WTC11 (cell line): ENCODE measurements at regions of chr1 and their contacts with region 1.

Region 1: GRCh38 chr1:28736450-28737306 is at the start of gene YTHDF2:
- DNase-seq: peak; percentile 98
- ATAC-seq: peak; percentile 88
- H3K4me3 Mint-ChIP-seq: peak within 1 kb of the TSS; percentile 94
- H3K27ac Mint-ChIP-seq: peak within 1 kb of the TSS; percentile 100
- H3K4me1 Mint-ChIP-seq: peaks cover 40% of the 10 kb centered on the region
- H3K27me3 Mint-ChIP-seq: no peaks in the 10 kb centered on the region
- CTCF ChIP-seq: peak; percentile 86
- total RNA-seq, gene YTHDF2: 111 to 126 TPM (median 114 TPM) in 3 replicates

Region 2: GRCh38 chr1:28190337-28190979 is 546.2 kb before region 1 on chr1:
- CTCF ChIA-PET with region 1: no interaction called
- POLR2A ChIA-PET with region 1: no interaction called
- DNase-seq: no peak
- ATAC-seq: no peak
- H3K4me3 Mint-ChIP-seq: no peak overlapping the region
- H3K27ac Mint-ChIP-seq: peak overlapping the region; percentile 53; the same call in 1 of the 2 replicates
- H3K4me1 Mint-ChIP-seq: peaks cover 12% of the 10 kb centered on the region
- H3K27me3 Mint-ChIP-seq: no peaks in the 10 kb centered on the region
- CTCF ChIP-seq: no peak

Region 3: DNA sequence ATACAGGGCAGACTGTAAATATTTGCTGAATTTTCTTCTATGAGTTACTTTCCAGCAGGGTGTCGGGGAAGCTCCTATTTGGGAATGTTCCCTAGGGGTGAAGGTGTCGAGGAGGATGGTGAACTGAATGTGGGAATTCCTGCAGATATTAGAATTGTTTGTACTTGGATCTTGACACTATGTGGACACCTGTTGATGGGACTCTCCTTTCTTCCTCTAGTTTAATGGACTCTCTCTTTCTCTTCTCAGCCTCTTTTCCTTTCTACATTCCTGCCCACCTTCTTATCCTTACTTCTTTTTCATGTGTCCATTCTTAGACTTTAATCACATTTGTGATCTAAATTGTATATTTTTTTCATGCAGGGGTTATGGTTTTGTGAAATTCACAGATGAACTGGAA is 169.7 kb before region 1 on chr1:
- CTCF ChIA-PET with region 1: no interaction called
- POLR2A ChIA-PET with region 1: no interaction called
- DNase-seq: no peak
- ATAC-seq: no peak
- H3K4me3 Mint-ChIP-seq: no peak overlapping the region
- H3K27ac Mint-ChIP-seq: no peak overlapping the region
- H3K4me1 Mint-ChIP-seq: no peaks in the 10 kb centered on the region
- H3K27me3 Mint-ChIP-seq: no peaks in the 10 kb centered on the region
- CTCF ChIP-seq: no peak

Region 4: DNA sequence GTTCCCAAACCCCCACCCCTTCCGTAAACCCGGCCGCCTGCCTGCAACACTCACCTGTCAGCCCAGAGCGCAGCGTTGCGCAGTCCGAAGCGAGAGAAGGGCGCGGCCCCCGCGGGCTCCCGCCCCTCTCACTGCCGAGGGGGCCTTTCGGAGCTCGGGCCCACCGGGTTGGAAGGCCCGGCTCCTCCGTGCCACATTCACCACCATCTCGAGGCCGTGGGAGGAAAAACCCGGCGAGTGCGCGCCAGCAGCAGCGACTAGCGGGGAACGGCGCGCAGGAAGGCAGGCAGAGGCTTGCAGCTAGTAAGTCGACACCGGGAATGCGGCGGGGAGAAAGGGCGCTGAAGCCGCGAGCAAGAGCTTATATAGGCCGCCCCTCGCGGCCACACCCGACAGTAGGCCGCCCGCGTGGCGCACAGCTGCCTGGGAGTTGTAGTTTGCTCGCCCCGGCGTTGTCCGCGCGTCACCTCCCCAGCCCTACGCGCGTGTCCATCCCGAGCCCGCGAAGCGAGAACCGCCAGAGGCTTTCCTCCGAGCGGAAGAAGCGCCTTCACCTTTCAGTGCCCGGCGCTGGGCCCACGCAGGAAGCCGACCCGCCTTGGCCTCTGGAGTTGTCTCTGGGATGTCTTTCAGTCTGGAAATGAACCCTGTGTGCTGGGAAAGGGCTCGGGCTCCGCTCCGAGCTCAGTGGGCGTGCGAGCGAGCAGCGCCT is 155.0 kb before region 1 on chr1:
- CTCF ChIA-PET with region 1: interaction called, 7 read pairs
- POLR2A ChIA-PET with region 1: interaction called, 14 read pairs
- DNase-seq: peak; percentile 95
- ATAC-seq: peak; percentile 73
- H3K4me3 Mint-ChIP-seq: peak overlapping the region; percentile 92
- H3K27ac Mint-ChIP-seq: peak overlapping the region; percentile 83; the same call in 1 of the 2 replicates
- H3K4me1 Mint-ChIP-seq: peaks cover 24% of the 10 kb centered on the region
- H3K27me3 Mint-ChIP-seq: no peaks in the 10 kb centered on the region
- CTCF ChIP-seq: no peak

Region 5: DNA sequence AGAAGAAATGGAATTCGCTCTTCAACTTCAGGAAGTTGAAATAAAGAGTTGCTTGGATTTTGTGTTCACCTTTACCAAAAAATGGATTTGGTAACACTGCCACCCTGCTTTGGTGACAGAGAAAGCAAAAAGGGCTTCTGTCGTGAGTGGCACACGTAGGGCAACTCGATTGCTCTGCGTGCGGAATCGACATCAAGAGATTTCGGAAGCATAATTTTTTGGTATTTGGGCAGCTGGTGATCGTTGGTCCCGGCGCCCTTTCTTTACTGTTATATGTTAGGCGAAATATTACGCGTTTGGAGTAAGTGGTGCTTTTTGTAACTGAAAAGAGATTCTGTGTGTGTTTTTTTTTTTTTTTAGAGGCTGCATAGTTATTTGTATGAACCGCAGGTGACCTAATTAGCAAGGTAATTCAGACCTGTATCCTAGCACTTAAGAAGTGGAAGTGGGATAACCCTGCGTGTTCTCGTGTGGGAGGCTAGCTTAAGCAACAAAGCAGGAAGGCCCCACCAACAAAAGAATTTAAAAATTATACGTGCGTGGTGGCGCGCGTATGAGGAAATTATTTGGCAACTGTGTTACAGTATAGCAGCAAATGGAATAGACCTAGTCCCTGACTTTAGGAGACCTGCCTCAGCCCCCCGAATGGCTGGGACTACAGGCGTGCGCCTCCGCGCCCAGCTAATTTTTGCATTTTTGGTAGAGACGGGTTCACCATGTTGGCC is 88.0 kb before region 1 on chr1 and contains the start of gene RNU11:
- CTCF ChIA-PET with region 1: interaction called, 19 read pairs
- POLR2A ChIA-PET with region 1: interaction called, 26 read pairs
- DNase-seq: peak; percentile 69
- ATAC-seq: peak; percentile 79
- H3K4me3 Mint-ChIP-seq: peak within 1 kb of the TSS; percentile 74
- H3K27ac Mint-ChIP-seq: peak within 1 kb of the TSS; percentile 100
- H3K4me1 Mint-ChIP-seq: peaks cover 18% of the 10 kb centered on the region
- H3K27me3 Mint-ChIP-seq: no peaks in the 10 kb centered on the region
- CTCF ChIP-seq: no peak
- total RNA-seq, gene RNU11: not detected in 3 replicates

Region 6: DNA sequence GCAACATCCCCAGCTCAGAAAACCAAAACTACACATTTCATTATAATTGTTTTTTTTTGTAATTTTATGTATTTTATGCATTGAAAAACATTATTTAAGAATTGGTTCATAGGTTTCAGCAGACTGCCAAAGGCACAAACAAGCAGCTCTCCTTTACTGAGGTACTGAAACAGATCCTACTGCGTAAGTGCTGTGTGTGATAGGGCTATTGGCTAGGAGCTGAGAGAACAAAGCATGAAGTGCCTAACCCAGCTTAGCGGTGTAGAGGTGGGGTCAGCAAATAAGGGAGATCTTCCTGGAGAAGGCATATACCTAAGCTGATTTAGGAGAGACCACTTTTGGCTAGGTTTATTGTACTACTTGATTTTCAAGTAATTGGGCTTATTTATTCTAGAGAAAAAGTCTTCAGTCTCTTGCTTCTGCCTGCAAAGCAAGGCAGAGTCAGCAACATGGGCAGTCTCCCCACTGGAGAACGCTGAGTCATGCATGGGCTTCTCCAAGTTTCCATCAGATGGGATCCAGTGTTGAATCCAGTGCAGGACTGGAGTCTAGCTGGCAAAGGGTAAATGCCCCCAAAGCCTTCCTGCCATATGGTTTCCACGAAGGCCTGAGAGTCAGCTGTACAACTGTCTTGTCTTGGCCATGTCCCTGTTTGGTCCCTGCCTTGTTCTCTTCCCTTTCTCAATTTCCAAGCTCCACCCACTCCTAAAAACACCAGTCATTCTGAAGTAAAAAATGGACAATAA is 17.9 kb before region 1 on chr1:
- CTCF ChIA-PET with region 1: interaction called, 11 read pairs
- POLR2A ChIA-PET with region 1: interaction called, 6 read pairs
- DNase-seq: no peak
- ATAC-seq: peak; percentile 63
- H3K4me3 Mint-ChIP-seq: no peak overlapping the region
- H3K27ac Mint-ChIP-seq: peak overlapping the region; percentile 54; the same call in 1 of the 2 replicates
- H3K4me1 Mint-ChIP-seq: peaks cover 10% of the 10 kb centered on the region
- H3K27me3 Mint-ChIP-seq: no peaks in the 10 kb centered on the region
- CTCF ChIP-seq: no peak

Region 7: GRCh38 chr1:28756846-28757245 is 20.2 kb after region 1 on chr1:
- CTCF ChIA-PET with region 1: interaction called, 12 read pairs
- POLR2A ChIA-PET with region 1: interaction called, 17 read pairs
- DNase-seq: no peak
- ATAC-seq: peak; percentile 67
- H3K4me3 Mint-ChIP-seq: no peak overlapping the region
- H3K27ac Mint-ChIP-seq: peak overlapping the region; percentile 58; the same call in 1 of the 2 replicates
- H3K4me1 Mint-ChIP-seq: peaks cover 14% of the 10 kb centered on the region
- H3K27me3 Mint-ChIP-seq: no peaks in the 10 kb centered on the region
- CTCF ChIP-seq: no peak